ENCODE measurements at regions of chr1 and their contacts with region 1.

Region 1: DNA sequence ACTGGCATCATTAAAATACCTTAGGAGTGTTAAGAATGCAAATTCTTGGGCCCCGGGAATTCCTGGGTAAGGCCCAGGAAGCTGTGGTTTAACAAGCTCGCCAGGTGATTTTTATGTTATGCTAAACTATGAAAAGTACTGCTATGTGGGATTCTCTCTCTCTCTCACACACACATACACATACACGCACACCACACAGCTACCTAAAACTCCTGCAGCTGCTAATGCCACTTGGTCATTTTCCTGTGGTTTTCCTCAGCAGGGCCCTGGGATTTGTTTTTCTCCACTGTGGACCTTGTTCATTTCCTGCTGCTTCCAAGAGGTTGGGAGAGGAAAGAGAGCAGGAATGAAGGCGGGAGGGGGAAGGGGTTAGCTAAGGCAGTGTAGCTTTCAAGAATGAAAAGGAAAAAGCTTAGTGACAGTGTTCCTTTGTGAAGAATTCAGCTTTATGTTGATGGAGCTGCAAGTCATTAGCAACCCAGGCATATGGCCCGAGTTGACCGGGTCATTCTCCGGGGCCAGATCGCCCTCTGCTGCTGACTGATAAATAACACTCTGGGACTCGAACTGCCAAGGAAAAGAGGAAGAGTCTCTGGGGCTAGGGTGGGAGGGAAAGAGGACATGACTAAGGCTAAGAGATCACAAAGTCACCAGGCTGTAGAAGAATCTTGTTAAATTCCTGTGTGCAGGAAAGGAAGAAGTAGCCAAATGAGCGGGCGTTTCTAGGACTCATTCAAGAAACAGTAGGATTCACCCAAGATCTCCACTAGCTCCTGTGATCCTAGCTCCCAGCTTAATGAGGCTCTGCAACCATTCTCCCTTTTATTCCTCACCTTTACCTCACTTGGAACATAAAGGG is 30.5 kb upstream of the LRIG2 start:
- DNase-seq: peak; percentile 73
- H3K4me3 ChIP-seq: no peak overlapping the region
- H3K4me3 Mint-ChIP-seq: no peak overlapping the region
- H3K27ac Mint-ChIP-seq: peak overlapping the region; percentile 81
- H3K4me1 ChIP-seq: peaks cover 49% of the 10 kb centered on the region
- H3K4me1 Mint-ChIP-seq: peaks cover 31% of the 10 kb centered on the region
- H3K27me3 ChIP-seq: no peaks in the 10 kb centered on the region
- H3K27me3 Mint-ChIP-seq: no peaks in the 10 kb centered on the region
- CTCF ChIP-seq: peak; percentile 22 to 46

Region 2: GRCh38 chr1:112715264-112716053 is 327.1 kb before region 1 on chr1 and contains the start of gene PPM1J:
- CTCF ChIA-PET with region 1: interaction called, 5 read pairs
- POLR2A ChIA-PET with region 1: interaction called, 3 read pairs
- intact Hi-C with region 1: loop called (anchors 1 kb)
- DNase-seq: peak; percentile 96 to 97
- H3K4me3 ChIP-seq: peak within 1 kb of the TSS; percentile 50
- H3K4me3 Mint-ChIP-seq: peak within 1 kb of the TSS; percentile 87
- H3K27ac Mint-ChIP-seq: no peak within 1 kb of the TSS
- H3K4me1 ChIP-seq: peaks cover 8% of the 10 kb centered on the region; the same call in 1 of the 2 replicates
- H3K4me1 Mint-ChIP-seq: peaks cover 11% of the 10 kb centered on the region
- H3K27me3 ChIP-seq: no peaks in the 10 kb centered on the region
- H3K27me3 Mint-ChIP-seq: no peaks in the 10 kb centered on the region
- CTCF ChIP-seq: no peak
- total RNA-seq, gene PPM1J: 1.1 and 1.5 TPM in 2 replicates

Region 3: GRCh38 chr1:112882271-112882744 is 160.2 kb before region 1 on chr1:
- CTCF ChIA-PET with region 1: interaction called, 23 read pairs
- POLR2A ChIA-PET with region 1: no interaction called
- intact Hi-C with region 1: loop called (anchors 1 kb)
- DNase-seq: no peak
- H3K4me3 ChIP-seq: no peak overlapping the region
- H3K4me3 Mint-ChIP-seq: no peak overlapping the region
- H3K27ac Mint-ChIP-seq: peak overlapping the region; percentile 40
- H3K4me1 ChIP-seq: peaks cover 6% of the 10 kb centered on the region; the same call in 1 of the 2 replicates
- H3K4me1 Mint-ChIP-seq: peaks cover 11% of the 10 kb centered on the region
- H3K27me3 ChIP-seq: no peaks in the 10 kb centered on the region
- H3K27me3 Mint-ChIP-seq: no peaks in the 10 kb centered on the region
- CTCF ChIP-seq: no peak

Region 4: GRCh38 chr1:112975336-112975735 is 67.2 kb before region 1 on chr1:
- CTCF ChIA-PET with region 1: no interaction called
- POLR2A ChIA-PET with region 1: no interaction called
- intact Hi-C with region 1: loop called (anchors 5 kb)
- DNase-seq: peak in 1 of 2 experiments; percentile 31
- H3K4me3 ChIP-seq: no peak overlapping the region
- H3K4me3 Mint-ChIP-seq: no peak overlapping the region
- H3K27ac Mint-ChIP-seq: no peak overlapping the region
- H3K4me1 ChIP-seq: peaks cover 14% of the 10 kb centered on the region; the same call in 1 of the 2 replicates
- H3K4me1 Mint-ChIP-seq: no peaks in the 10 kb centered on the region
- H3K27me3 ChIP-seq: no peaks in the 10 kb centered on the region
- H3K27me3 Mint-ChIP-seq: no peaks in the 10 kb centered on the region
- CTCF ChIP-seq: no peak

Region 5: GRCh38 chr1:113072757-113073478 is 30.4 kb after region 1 on chr1 and contains the start of gene LRIG2:
- CTCF ChIA-PET with region 1: interaction called, 34 read pairs
- POLR2A ChIA-PET with region 1: interaction called, 5 read pairs
- intact Hi-C with region 1: loop called (anchors 2 kb)
- DNase-seq: peak; percentile 96 to 98
- H3K4me3 ChIP-seq: peak within 1 kb of the TSS; percentile 92
- H3K4me3 Mint-ChIP-seq: peak within 1 kb of the TSS; percentile 85
- H3K27ac Mint-ChIP-seq: peak within 1 kb of the TSS; percentile 80
- H3K4me1 ChIP-seq: peaks cover 5% of the 10 kb centered on the region
- H3K4me1 Mint-ChIP-seq: no peaks in the 10 kb centered on the region
- H3K27me3 ChIP-seq: no peaks in the 10 kb centered on the region
- H3K27me3 Mint-ChIP-seq: no peaks in the 10 kb centered on the region
- CTCF ChIP-seq: peak; percentile 45 to 56
- total RNA-seq, gene LRIG2: 10.7 and 14.4 TPM in 2 replicates

Measured in Caco-2 (cell line).